B cell (primary cell): ENCODE measurements at regions of chr1 and their contacts with region 1.

Region 1: DNA sequence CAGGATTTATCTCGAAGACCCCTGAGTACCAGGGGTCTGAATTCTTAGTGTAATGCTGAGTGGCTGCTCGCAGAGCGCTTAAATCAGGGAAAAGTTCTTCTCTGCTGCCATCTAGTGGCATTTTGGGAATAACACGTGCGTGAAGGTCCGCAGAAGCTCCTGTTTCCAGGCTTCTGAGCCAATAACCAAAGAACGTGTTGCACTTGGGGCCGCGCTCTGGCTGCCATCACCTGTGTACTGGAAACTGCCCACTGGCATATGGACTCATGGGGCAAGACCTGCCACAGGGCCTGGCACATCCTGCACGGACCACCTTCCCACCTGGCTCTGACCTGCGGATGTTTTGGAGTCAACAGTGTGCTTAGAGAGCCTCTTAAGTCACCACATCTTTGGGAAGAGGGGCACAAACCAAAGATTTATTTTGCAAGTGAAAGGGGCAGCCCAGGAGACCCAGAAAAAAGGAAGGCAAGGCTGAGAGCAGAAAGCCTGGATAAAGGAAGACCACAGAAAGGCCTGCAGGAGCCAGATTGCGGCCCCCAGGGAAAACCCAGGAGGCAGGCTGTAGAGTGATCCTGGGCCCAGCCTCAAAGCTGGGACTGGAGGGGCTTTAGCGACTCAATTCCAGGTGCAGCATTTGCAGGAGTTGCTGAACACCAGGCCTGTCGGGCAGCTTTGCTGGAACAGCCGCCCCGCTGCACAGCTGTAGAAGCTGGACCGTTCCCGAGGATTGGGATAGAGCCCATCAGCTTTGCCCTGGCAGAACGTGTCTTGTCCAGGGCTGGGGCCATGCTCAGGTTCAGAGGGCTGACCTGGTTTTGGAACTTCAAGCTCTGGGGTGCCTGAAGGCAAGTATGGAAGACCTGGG is 13.0 kb downstream of the CHIT1 start:
- DNase-seq: peak; percentile 75
- ATAC-seq: peak; percentile 36
- H3K4me3 ChIP-seq: no peak overlapping the region
- H3K4me3 Mint-ChIP-seq: no peak overlapping the region
- H3K27ac ChIP-seq: no peak overlapping the region
- H3K27ac Mint-ChIP-seq: no peak overlapping the region
- H3K4me1 ChIP-seq: no peaks in the 10 kb centered on the region
- H3K4me1 Mint-ChIP-seq: no peaks in the 10 kb centered on the region
- H3K27me3 ChIP-seq: peaks cover 0 to 20% (median 0%) of the 10 kb centered on the region in 4 experiments
- H3K27me3 Mint-ChIP-seq: peaks cover 9% of the 10 kb centered on the region
- CTCF ChIP-seq: peak; percentile 91

Region 2: DNA sequence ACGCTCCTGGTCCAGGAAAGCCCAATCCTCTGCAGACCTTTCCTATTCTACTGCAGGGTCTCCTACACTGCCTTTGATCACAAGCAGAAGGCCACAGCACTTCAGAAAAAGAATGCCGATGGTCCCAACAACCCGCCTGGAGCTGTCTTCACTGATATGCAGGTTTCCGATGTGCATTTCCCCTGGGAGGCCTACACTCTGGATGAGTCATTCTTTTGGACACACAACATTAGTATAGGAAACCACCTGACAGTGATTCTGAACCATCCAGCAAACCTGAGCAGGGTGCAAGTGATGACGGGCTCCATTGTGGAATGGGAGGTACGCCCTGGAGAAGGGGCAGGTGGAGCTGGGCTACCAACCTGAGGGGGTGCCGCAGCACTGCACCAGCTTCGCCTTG is 390.7 kb before region 1 on chr1:
- CTCF ChIA-PET with region 1: no interaction called
- POLR2A ChIA-PET with region 1: no interaction called
- intact Hi-C with region 1: no loop called
- DNase-seq: no peak
- ATAC-seq: no peak
- H3K4me3 ChIP-seq: no peak overlapping the region
- H3K4me3 Mint-ChIP-seq: no peak overlapping the region
- H3K27ac ChIP-seq: no peak overlapping the region
- H3K27ac Mint-ChIP-seq: no peak overlapping the region
- H3K4me1 ChIP-seq: no peaks in the 10 kb centered on the region
- H3K4me1 Mint-ChIP-seq: peaks cover 2% of the 10 kb centered on the region
- H3K27me3 ChIP-seq: peaks cover 0 to 8% (median 0%) of the 10 kb centered on the region in 4 experiments
- H3K27me3 Mint-ChIP-seq: peaks cover 12% of the 10 kb centered on the region
- CTCF ChIP-seq: no peak

Region 3: GRCh38 chr1:203038891-203039608 is 177.5 kb before region 1 on chr1:
- CTCF ChIA-PET with region 1: interaction called, 135 read pairs
- POLR2A ChIA-PET with region 1: no interaction called
- intact Hi-C with region 1: no loop called
- DNase-seq: peak; percentile 73
- ATAC-seq: peak; percentile 78
- H3K4me3 ChIP-seq: no peak overlapping the region
- H3K4me3 Mint-ChIP-seq: no peak overlapping the region
- H3K27ac ChIP-seq: no peak overlapping the region
- H3K27ac Mint-ChIP-seq: no peak overlapping the region
- H3K4me1 ChIP-seq: peaks cover 0 to 2% of the 10 kb centered on the region in 2 donors
- H3K4me1 Mint-ChIP-seq: peaks cover 1% of the 10 kb centered on the region
- H3K27me3 ChIP-seq: peaks cover 0 to 10% (median 2%) of the 10 kb centered on the region in 4 experiments
- H3K27me3 Mint-ChIP-seq: peaks cover 12% of the 10 kb centered on the region
- CTCF ChIP-seq: peak; percentile 93

Region 4: DNA sequence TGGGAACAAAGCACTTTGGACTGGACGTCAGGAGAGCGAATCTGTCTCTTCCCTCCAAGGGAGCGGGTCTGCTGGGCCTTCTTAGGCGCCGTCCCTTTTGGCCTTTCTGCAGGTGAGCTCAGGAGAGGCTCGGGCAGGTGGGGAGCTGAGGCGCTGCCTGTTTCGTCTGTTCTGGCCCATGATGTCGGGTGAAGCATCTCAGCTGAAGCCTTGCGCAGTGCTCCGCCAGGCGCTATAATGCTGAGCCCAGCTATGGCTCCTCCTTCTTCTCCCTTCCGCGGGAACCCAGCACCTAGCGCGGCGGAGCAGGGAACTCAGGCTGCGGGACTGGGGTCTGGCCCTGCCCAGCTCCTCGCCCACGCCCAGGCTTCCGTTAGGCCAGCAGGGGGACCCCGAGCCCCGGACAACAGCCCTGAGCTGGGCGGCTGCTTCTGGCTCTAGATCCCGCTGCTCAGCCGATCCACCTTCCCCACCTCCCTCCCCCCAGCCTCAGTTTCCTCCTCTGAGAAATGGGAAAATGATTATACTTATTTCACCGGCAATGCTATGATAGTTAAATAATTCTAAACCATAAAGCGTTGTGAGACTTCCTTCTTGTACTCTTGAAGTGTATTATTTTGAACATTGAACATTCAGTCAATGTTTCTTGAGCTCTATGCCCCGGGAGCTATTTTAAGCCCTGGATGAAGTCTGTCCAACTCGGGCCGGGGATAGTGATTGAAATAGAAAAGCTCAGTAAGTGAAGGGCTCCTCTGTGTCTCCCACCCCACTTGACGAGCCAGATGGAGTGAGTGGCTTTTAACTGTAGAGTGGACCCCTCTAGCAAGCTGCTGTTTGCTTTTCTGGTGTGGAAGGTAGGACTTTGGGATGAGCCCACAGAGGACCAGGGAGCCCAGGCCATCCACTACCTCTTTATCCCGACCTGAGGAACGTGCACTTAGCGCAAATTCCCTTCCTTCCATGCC is 98.6 kb before region 1 on chr1:
- CTCF ChIA-PET with region 1: interaction called, 26 read pairs
- POLR2A ChIA-PET with region 1: no interaction called
- intact Hi-C with region 1: loop called (anchors 5 kb)
- DNase-seq: peak; percentile 26
- ATAC-seq: peak; percentile 36
- H3K4me3 ChIP-seq: no peak overlapping the region
- H3K4me3 Mint-ChIP-seq: no peak overlapping the region
- H3K27ac ChIP-seq: no peak overlapping the region
- H3K27ac Mint-ChIP-seq: no peak overlapping the region
- H3K4me1 ChIP-seq: no peaks in the 10 kb centered on the region
- H3K4me1 Mint-ChIP-seq: peaks cover 5% of the 10 kb centered on the region
- H3K27me3 ChIP-seq: peaks cover 0 to 34% (median 13%) of the 10 kb centered on the region in 4 experiments
- H3K27me3 Mint-ChIP-seq: peaks cover 61% of the 10 kb centered on the region
- CTCF ChIP-seq: no peak